K562 (cell line): ENCODE measurements at regions of chr6 and their contacts with region 1.

Region 1: GRCh38 chr6:36360241-36361054 is 23.8 kb upstream of the BNIP5 start:
- DNase-seq: peak; percentile 85 to 89 (median 88)
- ATAC-seq: peak; percentile 96
- H3K4me3 ChIP-seq: no peak overlapping the region
- H3K27ac ChIP-seq: no peak overlapping the region
- H3K4me1 ChIP-seq: peaks cover 9 to 20% of the 10 kb centered on the region in 2 experiments; a peak in 4 of 5 replicates
- H3K27me3 ChIP-seq: peaks cover 0 to 4% of the 10 kb centered on the region in 2 experiments; a peak in 2 of 5 replicates
- CTCF ChIP-seq: peak; percentile 94 to 97 (median 95)
- EP300 ChIP-seq: no peak
- POLR2A ChIP-seq: no peak
- RAD21 ChIP-seq: peak; percentile 93 to 97

Region 2: GRCh38 chr6:36123257-36124139 is 236.9 kb before region 1 on chr6:
- CTCF ChIA-PET with region 1: interaction called, 6 read pairs
- POLR2A ChIA-PET with region 1: interaction called, 3 read pairs
- in situ Hi-C with region 1: no loop called
- intact Hi-C with region 1: loop called (anchors 2 kb)
- DNase-seq: peak; percentile 92 to 95 (median 94)
- ATAC-seq: peak; percentile 87
- H3K4me3 ChIP-seq: no peak overlapping the region
- H3K27ac ChIP-seq: 0 out of 3 replicates have a peak overlapping the region, but pooled peaks have one; percentile 2
- H3K4me1 ChIP-seq: peaks cover 55 to 69% of the 10 kb centered on the region in 2 experiments
- H3K27me3 ChIP-seq: no peaks in the 10 kb centered on the region
- CTCF ChIP-seq: peak; percentile 79 to 92 (median 92)
- EP300 ChIP-seq: peak; percentile 40; the same call in 1 of the 2 replicates
- POLR2A ChIP-seq: no peak
- RAD21 ChIP-seq: peak; percentile 74 to 90

Region 3: GRCh38 chr6:36139429-36139828 is 221.0 kb before region 1 on chr6:
- CTCF ChIA-PET with region 1: interaction called, 3 read pairs
- POLR2A ChIA-PET with region 1: no interaction called
- in situ Hi-C with region 1: no loop called
- intact Hi-C with region 1: loop called (anchors 5 kb)
- DNase-seq: peak; percentile 56 to 68 (median 64)
- ATAC-seq: peak; percentile 87
- H3K4me3 ChIP-seq: no peak overlapping the region
- H3K27ac ChIP-seq: no peak overlapping the region
- H3K4me1 ChIP-seq: peaks cover 6 to 13% of the 10 kb centered on the region in 2 experiments; a peak in 4 of 5 replicates
- H3K27me3 ChIP-seq: peaks cover 4 to 22% of the 10 kb centered on the region in 2 experiments; a peak in 2 of 5 replicates
- CTCF ChIP-seq: peak; percentile 73 to 85 (median 75)
- EP300 ChIP-seq: no peak
- POLR2A ChIP-seq: no peak
- RAD21 ChIP-seq: peak; percentile 37 to 76; a peak in 3 of 4 replicates

Region 4: GRCh38 chr6:36252005-36252404 is 108.4 kb before region 1 on chr6:
- CTCF ChIA-PET with region 1: no interaction called
- POLR2A ChIA-PET with region 1: no interaction called
- in situ Hi-C with region 1: no loop called
- intact Hi-C with region 1: loop called (anchors 5 kb)
- DNase-seq: no peak
- ATAC-seq: no peak
- H3K4me3 ChIP-seq: no peak overlapping the region
- H3K27ac ChIP-seq: no peak overlapping the region
- H3K4me1 ChIP-seq: no peaks in the 10 kb centered on the region
- H3K27me3 ChIP-seq: peaks cover 37 to 42% of the 10 kb centered on the region in 2 experiments
- CTCF ChIP-seq: no peak
- EP300 ChIP-seq: no peak
- POLR2A ChIP-seq: no peak
- RAD21 ChIP-seq: no peak

Region 5: GRCh38 chr6:36302227-36302976 is 58.0 kb before region 1 on chr6:
- CTCF ChIA-PET with region 1: interaction called, 45 read pairs
- POLR2A ChIA-PET with region 1: no interaction called
- in situ Hi-C with region 1: no loop called
- intact Hi-C with region 1: loop called (anchors 1 kb)
- DNase-seq: peak; percentile 85 to 97 (median 88)
- ATAC-seq: peak; percentile 98
- H3K4me3 ChIP-seq: no peak overlapping the region
- H3K27ac ChIP-seq: no peak overlapping the region
- H3K4me1 ChIP-seq: no peaks in the 10 kb centered on the region
- H3K27me3 ChIP-seq: peaks cover 35 to 57% of the 10 kb centered on the region in 2 experiments
- CTCF ChIP-seq: peak; percentile 99
- EP300 ChIP-seq: peak; percentile 24; the same call in 1 of the 2 replicates
- POLR2A ChIP-seq: no peak
- RAD21 ChIP-seq: peak; percentile 84 to 92

Region 6: GRCh38 chr6:36340618-36341454 is 19.6 kb before region 1 on chr6:
- CTCF ChIA-PET with region 1: interaction called, 21 read pairs
- POLR2A ChIA-PET with region 1: interaction called, 15 read pairs
- in situ Hi-C with region 1: no loop called
- intact Hi-C with region 1: loop called (anchors 1 kb)
- DNase-seq: peak; percentile 84 to 89 (median 86)
- ATAC-seq: peak; percentile 93
- H3K4me3 ChIP-seq: peak overlapping the region; percentile 15; the same call in 1 of the 2 replicates
- H3K27ac ChIP-seq: no peak overlapping the region
- H3K4me1 ChIP-seq: peaks cover 7 to 12% of the 10 kb centered on the region in 2 experiments; a peak in 4 of 5 replicates
- H3K27me3 ChIP-seq: peaks cover 13 to 40% of the 10 kb centered on the region in 2 experiments; a peak in 4 of 5 replicates
- CTCF ChIP-seq: peak; percentile 96 to 99 (median 97)
- EP300 ChIP-seq: no peak
- POLR2A ChIP-seq: no peak
- RAD21 ChIP-seq: peak; percentile 84 to 86